ENCODE measurements at regions of chr10 and their contacts with region 1.

Region 1: DNA sequence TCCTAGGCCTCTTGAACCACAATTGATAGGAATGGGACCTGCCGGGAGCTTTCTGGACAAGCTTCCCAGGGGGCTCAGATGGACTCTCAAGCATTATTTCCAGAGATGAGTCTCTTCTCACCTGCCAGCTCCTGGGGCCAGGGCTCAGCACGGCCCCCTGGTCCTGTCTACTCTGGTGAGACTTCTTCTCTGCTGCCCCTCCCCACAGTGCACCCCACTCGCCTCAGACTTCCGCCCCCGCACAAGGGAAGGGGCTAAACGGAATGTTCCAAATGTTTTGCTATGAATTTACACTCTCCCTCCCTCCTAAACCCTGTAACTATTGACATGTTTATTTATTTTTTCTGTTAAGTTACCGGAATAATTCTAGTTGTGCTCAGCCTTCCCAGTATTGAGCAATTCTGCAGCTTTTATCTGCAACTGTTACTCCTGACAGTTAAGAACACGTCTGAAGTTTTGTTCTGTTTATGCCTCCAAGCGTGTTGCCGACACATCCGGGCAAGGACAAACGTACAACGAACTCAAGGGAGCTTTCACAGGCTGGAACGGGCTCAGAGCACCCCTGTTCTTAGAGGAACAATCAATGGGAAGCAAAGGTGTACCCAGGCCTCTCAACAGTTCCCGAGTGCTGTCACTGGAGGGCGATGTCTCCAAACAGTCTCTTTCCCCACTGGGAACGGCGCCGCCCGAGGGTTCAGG is 55.2 kb downstream of the FHIP2A start:
- DNase-seq: peak; percentile 71
- ATAC-seq: peak; percentile 79
- H3K4me3 Mint-ChIP-seq: no peak overlapping the region
- H3K27ac Mint-ChIP-seq: no peak overlapping the region
- H3K4me1 Mint-ChIP-seq: peaks cover 22% of the 10 kb centered on the region
- H3K27me3 Mint-ChIP-seq: peaks cover 24% of the 10 kb centered on the region

Region 2: GRCh38 chr10:114767101-114767985 is 109.4 kb before region 1 on chr10:
- CTCF ChIA-PET with region 1: no interaction called
- DNase-seq: no peak
- ATAC-seq: peak; percentile 43
- H3K4me3 Mint-ChIP-seq: peak overlapping the region; percentile 49
- H3K27ac Mint-ChIP-seq: no peak overlapping the region
- H3K4me1 Mint-ChIP-seq: peaks cover 10% of the 10 kb centered on the region
- H3K27me3 Mint-ChIP-seq: peaks cover 60% of the 10 kb centered on the region

Region 3: GRCh38 chr10:114783686-114784085 is 93.1 kb before region 1 on chr10:
- CTCF ChIA-PET with region 1: no interaction called
- DNase-seq: no peak
- ATAC-seq: no peak
- H3K4me3 Mint-ChIP-seq: no peak overlapping the region
- H3K27ac Mint-ChIP-seq: no peak overlapping the region
- H3K4me1 Mint-ChIP-seq: peaks cover 10% of the 10 kb centered on the region
- H3K27me3 Mint-ChIP-seq: peaks cover 2% of the 10 kb centered on the region

Region 4: DNA sequence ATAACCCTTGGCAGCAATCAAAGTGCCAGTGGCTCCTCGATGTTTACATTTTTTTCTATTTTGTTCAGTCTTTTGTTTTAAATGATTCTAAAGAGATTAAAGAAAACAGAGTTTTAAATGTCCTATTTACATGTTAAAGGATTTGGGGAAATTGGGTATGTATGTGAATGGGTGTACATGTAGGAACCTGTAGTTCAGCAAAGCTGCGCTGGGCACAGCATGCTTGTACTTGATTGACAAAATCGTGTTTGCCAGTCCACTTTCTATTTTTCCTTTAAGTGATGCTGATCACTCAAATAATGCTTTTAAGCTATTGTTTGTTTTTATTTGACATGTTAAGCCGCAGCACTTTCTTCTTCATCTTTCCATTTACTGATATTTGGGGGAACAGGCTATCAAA is 14.3 kb before region 1 on chr10:
- CTCF ChIA-PET with region 1: interaction called, 23 read pairs
- DNase-seq: no peak
- ATAC-seq: no peak
- H3K4me3 Mint-ChIP-seq: no peak overlapping the region
- H3K27ac Mint-ChIP-seq: no peak overlapping the region
- H3K4me1 Mint-ChIP-seq: peaks cover 6% of the 10 kb centered on the region
- H3K27me3 Mint-ChIP-seq: no peaks in the 10 kb centered on the region